Calu3 (cell line): ENCODE measurements at regions of chr22 and their contacts with region 1.

Region 1: DNA sequence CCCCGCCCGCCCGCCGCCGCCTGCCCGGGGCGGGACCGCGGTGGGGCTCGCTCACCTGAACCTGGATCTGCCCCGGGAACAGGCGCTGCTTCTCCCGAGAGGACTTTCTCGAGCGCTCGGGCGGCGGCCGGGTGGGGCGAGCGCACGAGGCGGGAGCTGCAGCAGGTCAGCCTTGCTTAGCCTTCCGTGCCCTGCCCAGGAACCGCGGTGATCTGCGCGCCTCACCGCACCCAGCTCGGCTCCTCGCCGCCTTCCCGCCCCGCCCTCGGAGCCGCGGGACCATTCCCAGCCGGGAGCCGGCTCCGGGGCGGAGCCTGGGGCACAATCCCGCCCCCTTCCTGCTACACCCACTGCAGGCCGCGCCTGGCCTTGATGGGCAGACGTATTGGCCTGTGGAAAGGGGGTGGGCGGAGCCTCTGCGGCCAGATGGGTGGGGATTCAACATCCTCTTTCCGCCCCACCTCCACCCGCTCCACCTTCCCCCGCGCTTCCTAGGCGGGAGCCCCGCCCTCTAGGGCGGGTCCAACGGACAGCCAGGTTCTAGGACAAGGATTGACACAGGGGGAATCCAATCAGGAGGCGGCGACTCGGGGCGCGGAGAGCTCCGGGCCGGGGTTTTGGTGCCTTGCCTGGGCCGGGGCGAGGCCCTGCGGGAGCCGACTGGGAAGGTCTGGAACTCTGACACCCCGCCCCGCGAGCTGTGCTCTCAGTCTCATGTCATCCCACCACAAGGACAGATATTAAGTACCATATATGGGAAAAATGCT is at the start of gene MYH9:
- DNase-seq: peak; percentile 100
- H3K4me3 Mint-ChIP-seq: peak within 1 kb of the TSS; percentile 73
- H3K27ac Mint-ChIP-seq: peak within 1 kb of the TSS; percentile 82
- H3K4me1 Mint-ChIP-seq: peaks cover 32% of the 10 kb centered on the region
- H3K27me3 Mint-ChIP-seq: no peaks in the 10 kb centered on the region
- CTCF ChIP-seq: no peak
- total RNA-seq, gene MYH9: 526 and 606 TPM in 2 replicates

Region 2: DNA sequence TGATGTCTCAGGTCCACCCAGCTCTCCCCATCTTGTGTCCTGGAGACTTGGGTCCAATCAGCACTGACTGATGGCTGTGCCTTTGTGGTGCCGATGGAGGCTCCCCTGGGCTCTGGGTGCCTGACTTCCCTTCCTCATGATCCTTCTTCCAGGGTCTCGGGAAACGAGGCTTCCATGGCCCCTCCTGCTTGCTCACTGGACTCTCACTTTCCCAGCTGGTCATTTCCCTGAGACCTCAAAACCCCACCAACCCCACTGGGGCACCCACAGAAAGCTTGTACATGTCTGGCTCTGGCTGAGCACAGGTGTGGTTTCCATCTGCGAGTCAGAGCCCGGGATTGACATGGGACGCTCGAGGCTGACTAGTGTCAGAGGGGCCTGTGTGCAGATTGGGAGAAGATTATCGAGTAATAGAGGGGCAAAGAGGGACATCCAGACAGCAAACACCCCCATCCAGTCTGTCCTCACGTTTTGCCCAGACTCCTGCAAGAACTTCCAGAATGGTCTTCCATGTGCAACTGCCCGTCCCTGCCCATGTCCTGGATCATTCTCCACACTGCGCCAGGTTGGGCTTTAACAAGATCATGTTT is 119.9 kb before region 1 on chr22:
- CTCF ChIA-PET with region 1: no interaction called
- intact Hi-C with region 1: no loop called
- DNase-seq: no peak
- H3K4me3 Mint-ChIP-seq: no peak overlapping the region
- H3K27ac Mint-ChIP-seq: no peak overlapping the region
- H3K4me1 Mint-ChIP-seq: peaks cover 9% of the 10 kb centered on the region
- H3K27me3 Mint-ChIP-seq: no peaks in the 10 kb centered on the region
- CTCF ChIP-seq: no peak

Region 3: DNA sequence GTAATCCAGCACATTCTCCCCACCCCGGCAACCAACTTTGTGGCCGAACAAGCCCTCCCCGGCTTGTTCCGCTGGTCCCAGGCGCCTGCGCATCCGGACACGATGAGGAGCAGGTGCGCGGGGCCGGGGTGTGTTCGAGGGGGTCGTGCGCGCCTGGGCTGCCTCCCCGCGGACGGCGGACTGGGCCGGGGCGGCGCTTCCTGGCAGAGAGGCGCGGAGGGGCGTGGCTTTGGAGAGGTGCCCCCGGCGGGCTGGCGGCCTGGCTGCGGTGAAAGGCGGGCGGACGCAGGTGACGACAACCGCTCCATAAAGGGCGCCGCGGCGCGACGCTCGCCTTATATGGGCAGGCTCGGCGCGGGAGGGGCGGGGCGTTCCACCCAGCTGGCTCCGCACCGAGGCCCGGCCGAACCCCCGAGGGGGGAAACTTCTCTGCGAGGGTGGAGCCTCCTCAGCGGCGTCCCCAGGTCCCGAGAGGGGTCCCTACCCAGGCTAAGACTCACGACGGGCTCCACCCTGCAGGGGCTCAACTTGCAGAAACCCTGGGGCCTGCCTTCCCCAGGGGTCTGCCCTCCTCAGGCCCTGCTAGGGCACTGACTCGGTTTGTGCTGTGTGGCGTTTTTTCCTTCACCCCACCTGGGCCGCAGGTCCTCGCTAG is 67.1 kb after region 1 on chr22:
- CTCF ChIA-PET with region 1: interaction called, 3 read pairs
- intact Hi-C with region 1: loop called (anchors 5 kb)
- DNase-seq: peak; percentile 97
- H3K4me3 Mint-ChIP-seq: peak overlapping the region; percentile 58
- H3K27ac Mint-ChIP-seq: peak overlapping the region; percentile 85
- H3K4me1 Mint-ChIP-seq: peaks cover 22% of the 10 kb centered on the region
- H3K27me3 Mint-ChIP-seq: no peaks in the 10 kb centered on the region
- CTCF ChIP-seq: no peak

Region 4: DNA sequence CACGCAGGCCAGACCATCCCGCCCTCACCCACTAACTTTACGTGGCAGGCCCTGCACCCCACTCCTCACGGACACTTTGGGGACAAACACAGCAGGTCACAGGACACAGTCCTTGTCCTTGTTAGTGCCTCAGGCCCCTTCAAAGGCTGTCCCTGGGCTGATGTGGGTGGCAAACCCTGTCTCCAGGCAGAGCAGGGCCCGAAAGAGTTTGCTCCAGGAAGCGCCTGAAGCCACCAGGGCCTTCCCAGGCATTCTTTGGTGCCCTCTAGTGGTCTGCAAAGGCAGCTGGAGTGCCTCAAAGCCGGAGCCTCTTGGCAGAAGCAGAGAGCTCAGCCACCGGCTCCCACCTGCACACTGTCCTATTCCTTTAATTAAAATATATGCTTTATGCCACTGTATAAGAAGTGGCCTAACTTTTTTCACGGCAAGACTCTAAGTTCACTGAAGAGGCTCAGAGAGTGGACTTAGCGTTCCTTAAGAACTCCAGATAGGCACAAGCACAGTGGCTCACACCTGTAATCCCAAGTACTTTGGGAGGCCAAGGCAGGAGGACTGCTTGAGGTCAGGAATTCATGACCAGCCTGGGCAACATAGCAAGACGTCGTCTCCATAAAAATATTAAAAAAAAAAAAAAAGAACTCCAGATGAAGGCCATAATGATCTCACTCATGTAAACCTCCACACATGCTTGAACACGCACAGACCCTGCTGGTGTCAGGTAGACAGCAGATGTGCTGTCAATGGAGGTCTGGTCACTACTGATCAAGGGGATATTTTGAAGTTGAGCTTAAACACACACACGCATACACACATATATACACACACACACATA is 82.4 kb after region 1 on chr22:
- CTCF ChIA-PET with region 1: interaction called, 5 read pairs
- intact Hi-C with region 1: loop called (anchors 5 kb)
- DNase-seq: peak; percentile 85
- H3K4me3 Mint-ChIP-seq: no peak overlapping the region
- H3K27ac Mint-ChIP-seq: no peak overlapping the region
- H3K4me1 Mint-ChIP-seq: peaks cover 31% of the 10 kb centered on the region
- H3K27me3 Mint-ChIP-seq: no peaks in the 10 kb centered on the region
- CTCF ChIP-seq: peak; percentile 91

Region 5: GRCh38 chr22:36577019-36577418 is 189.1 kb after region 1 on chr22:
- CTCF ChIA-PET with region 1: no interaction called
- intact Hi-C with region 1: no loop called
- DNase-seq: no peak
- H3K4me3 Mint-ChIP-seq: no peak overlapping the region
- H3K27ac Mint-ChIP-seq: no peak overlapping the region
- H3K4me1 Mint-ChIP-seq: no peaks in the 10 kb centered on the region
- H3K27me3 Mint-ChIP-seq: peaks cover 77% of the 10 kb centered on the region
- CTCF ChIP-seq: no peak